ENCODE measurements at regions of chr17 and their contacts with region 1.

Region 1: GRCh38 chr17:81387100-81388090 is 7.9 kb upstream of the BAHCC1 start:
- DNase-seq: peak; percentile 80
- ATAC-seq: peak; percentile 44

Region 2: GRCh38 chr17:81200695-81201580 is 186.5 kb before region 1 on chr17:
- intact Hi-C with region 1: no loop called
- DNase-seq: no peak
- ATAC-seq: peak; percentile 41

Region 3: DNA sequence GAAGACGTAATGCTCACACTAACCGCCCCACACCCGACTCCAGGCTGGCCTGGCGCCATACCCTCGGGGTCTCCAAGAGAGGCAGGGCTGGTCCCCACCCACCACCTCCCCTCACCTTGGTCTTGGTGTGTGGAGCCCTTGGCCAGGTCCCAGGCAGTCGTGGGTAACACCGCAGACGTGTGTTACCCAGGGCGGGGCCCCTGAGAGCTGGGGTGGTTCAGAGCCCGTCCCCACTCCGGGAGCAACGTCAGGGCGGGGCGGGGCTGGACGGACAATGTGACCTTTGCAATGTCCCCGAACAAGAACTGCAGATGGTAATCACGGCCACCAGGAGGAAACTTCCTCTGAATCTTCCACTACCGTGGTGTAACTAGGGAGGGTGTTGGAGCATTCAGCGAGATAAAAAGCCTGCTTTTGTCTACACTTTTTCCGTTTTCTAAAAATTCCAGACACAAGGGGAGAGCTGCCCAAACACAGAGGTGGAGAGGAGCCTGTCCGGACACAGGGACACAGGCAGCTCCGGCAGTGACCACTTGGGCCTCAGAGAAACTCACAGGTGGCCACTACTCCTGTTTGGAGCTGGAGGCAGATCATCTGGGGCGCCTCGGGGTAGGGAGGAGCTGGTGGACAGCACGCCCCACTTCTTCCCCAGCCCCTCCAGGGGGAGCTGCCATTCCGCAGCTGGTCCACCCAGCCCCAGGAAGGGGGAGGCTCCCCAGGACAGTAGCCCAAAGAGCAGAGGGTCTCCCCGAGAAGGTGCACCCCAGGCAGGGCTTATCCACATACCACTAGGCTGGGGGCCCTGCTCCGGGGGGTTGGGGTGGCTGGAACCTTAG is 78.1 kb before region 1 on chr17:
- intact Hi-C with region 1: loop called (anchors 5 kb)
- DNase-seq: peak; percentile 97
- ATAC-seq: peak; percentile 93

Region 4: GRCh38 chr17:81365148-81365600 is 22.2 kb before region 1 on chr17:
- intact Hi-C with region 1: no loop called
- DNase-seq: peak; percentile 68
- ATAC-seq: peak; percentile 65

Region 5: GRCh38 chr17:81522491-81523474 is 135.4 kb after region 1 on chr17:
- intact Hi-C with region 1: no loop called
- DNase-seq: peak; percentile 30
- ATAC-seq: no peak